PC-9 (cell line): ENCODE measurements at regions of chr2 and their contacts with region 1.

Region 1: GRCh38 chr2:217785544-217786045 is 217.2 kb downstream of the TNS1 start:
- DNase-seq: peak in 1 of 2 experiments; percentile 75
- H3K4me3 ChIP-seq: no peak overlapping the region
- H3K27ac ChIP-seq: no peak overlapping the region
- H3K4me1 ChIP-seq: no peaks in the 10 kb centered on the region
- H3K27me3 ChIP-seq: no peaks in the 10 kb centered on the region; the same call in 1 of the 2 replicates
- CTCF ChIP-seq: peak; percentile 93

Region 2: GRCh38 chr2:217886720-217887309 is 101.2 kb after region 1 on chr2:
- CTCF ChIA-PET with region 1: interaction called, 9 read pairs
- POLR2A ChIA-PET with region 1: no interaction called
- intact Hi-C with region 1: loop called (anchors 1 kb)
- DNase-seq: peak; percentile 29 to 60
- H3K4me3 ChIP-seq: no peak overlapping the region
- H3K27ac ChIP-seq: no peak overlapping the region
- H3K4me1 ChIP-seq: no peaks in the 10 kb centered on the region
- H3K27me3 ChIP-seq: no peaks in the 10 kb centered on the region
- CTCF ChIP-seq: peak; percentile 89

Region 3: GRCh38 chr2:218033590-218034496 is 248.2 kb after region 1 on chr2:
- CTCF ChIA-PET with region 1: no interaction called
- POLR2A ChIA-PET with region 1: no interaction called
- intact Hi-C with region 1: loop called (anchors 1 kb)
- DNase-seq: no peak
- H3K4me3 ChIP-seq: no peak overlapping the region
- H3K27ac ChIP-seq: no peak overlapping the region
- H3K4me1 ChIP-seq: no peaks in the 10 kb centered on the region
- H3K27me3 ChIP-seq: peaks cover 37% of the 10 kb centered on the region
- CTCF ChIP-seq: no peak

Region 4: DNA sequence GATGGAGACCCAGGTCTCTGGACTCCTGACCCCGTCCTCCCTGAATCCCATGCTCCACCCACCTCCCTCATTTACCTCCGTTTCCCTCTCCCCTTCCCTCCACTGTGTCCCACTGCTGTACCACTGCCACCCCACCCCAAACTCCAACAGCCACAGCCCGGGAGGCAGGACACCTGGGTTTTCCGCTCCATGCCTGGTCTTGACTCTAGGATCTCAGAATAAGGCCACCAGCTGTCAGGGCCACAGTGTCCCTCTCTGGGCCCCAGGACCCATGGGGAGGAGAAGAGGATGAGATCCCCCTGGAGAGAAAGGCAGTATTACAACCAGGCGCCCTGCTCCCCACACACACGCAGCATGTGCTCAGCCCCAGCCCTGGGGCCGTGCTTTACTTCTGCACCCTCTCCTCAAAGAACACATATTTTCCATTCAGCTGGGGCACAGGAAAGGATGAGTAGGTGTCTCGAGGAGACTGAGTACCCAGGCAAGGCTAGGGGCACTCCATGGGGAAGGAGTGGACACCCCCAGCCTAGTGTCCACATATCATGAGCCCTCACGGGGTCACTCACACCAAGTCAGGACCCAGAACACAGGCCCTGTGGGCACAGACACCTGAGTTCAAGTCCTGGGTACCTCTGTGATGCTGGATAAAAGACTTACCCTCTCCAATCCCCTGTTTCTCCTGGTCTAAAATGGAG is 284.2 kb after region 1 on chr2:
- CTCF ChIA-PET with region 1: interaction called, 14 read pairs
- POLR2A ChIA-PET with region 1: no interaction called
- intact Hi-C with region 1: loop called (anchors 1 kb)
- DNase-seq: no peak
- H3K4me3 ChIP-seq: no peak overlapping the region
- H3K27ac ChIP-seq: no peak overlapping the region
- H3K4me1 ChIP-seq: no peaks in the 10 kb centered on the region
- H3K27me3 ChIP-seq: peaks cover 25% of the 10 kb centered on the region
- CTCF ChIP-seq: no peak